Activated naive CD4-positive, alpha-beta T cell treated with anti-CD3 and anti-CD28 coated beads, Interleukin-2, amount 10 ng/mL, durations not matched to agents 7 days and 5 days (primary cell): ENCODE measurements at regions of chr10 and their contacts with region 1.

Region 1: GRCh38 chr10:88742448-88742847 is 17.4 kb upstream of the LIPN start:
- DNase-seq: no peak
- H3K4me3 Mint-ChIP-seq: no peak overlapping the region
- H3K27ac Mint-ChIP-seq: no peak overlapping the region
- H3K4me1 Mint-ChIP-seq: no peaks in the 10 kb centered on the region
- H3K27me3 Mint-ChIP-seq: peaks cover 25% of the 10 kb centered on the region

Region 2: DNA sequence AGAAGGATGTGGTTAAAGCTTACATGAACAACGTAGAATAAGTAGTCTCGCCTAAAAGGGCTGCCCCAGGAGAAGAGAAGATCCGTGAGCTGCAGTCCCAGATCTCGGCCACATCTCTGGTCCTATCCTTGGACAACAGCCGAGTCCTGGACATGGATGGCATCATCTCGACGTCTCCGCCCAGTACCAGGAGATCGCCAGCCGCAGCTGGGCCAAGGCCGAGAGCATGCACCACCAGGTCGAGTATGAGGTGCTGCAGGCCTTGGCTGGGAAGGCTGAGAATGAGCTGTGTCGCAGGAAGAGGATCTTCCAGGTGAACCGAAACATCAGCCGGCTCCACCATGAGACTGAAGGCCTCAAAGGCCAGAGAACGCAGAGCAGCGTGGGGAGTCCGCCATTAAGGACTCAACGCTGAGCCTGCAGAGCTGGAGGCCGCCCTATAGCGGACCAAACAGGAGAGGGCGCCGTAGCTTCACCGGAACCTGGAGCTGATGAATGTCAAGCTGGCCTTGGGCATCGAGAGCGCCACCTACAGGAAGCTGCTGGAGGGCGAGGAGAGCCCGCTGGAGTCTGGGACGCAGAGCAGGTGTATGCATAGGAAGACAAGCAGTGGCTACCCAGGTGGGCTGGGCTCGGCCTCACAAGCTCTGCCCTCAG is 14.2 kb before region 1 on chr10:
- CTCF ChIA-PET with region 1: interaction called, 10 read pairs
- DNase-seq: peak; percentile 62
- H3K4me3 Mint-ChIP-seq: no peak overlapping the region
- H3K27ac Mint-ChIP-seq: no peak overlapping the region
- H3K4me1 Mint-ChIP-seq: peaks cover 3% of the 10 kb centered on the region
- H3K27me3 Mint-ChIP-seq: peaks cover 11% of the 10 kb centered on the region